Ascending aorta (tissue), 2 donors: ENCODE measurements at regions of chr12 and their contacts with region 1.

Region 1: GRCh38 chr12:80186727-80187217 is 87.4 kb downstream of the OTOGL start:
- DNase-seq: peak in 1 of 2 donors; percentile 88
- H3K4me3 ChIP-seq: peak overlapping the region in 1 of 2 donors; percentile 28
- H3K27ac ChIP-seq: peak overlapping the region; percentile 82 to 84
- H3K4me1 ChIP-seq: peaks cover 6 to 14% of the 10 kb centered on the region in 2 donors
- H3K27me3 ChIP-seq: no peaks in the 10 kb centered on the region
- CTCF ChIP-seq: peak; percentile 65 to 78 (median 69)

Region 2: GRCh38 chr12:79547735-79548609 is 638.8 kb before region 1 on chr12:
- intact Hi-C with region 1: loop called (anchors 2 kb)
- DNase-seq: no peak
- H3K4me3 ChIP-seq: no peak overlapping the region
- H3K27ac ChIP-seq: peak overlapping the region; percentile 83
- H3K4me1 ChIP-seq: peaks cover 18 to 42% of the 10 kb centered on the region in 2 donors
- H3K27me3 ChIP-seq: no peaks in the 10 kb centered on the region
- CTCF ChIP-seq: peak; percentile 24 to 80 (median 68)

Region 3: DNA sequence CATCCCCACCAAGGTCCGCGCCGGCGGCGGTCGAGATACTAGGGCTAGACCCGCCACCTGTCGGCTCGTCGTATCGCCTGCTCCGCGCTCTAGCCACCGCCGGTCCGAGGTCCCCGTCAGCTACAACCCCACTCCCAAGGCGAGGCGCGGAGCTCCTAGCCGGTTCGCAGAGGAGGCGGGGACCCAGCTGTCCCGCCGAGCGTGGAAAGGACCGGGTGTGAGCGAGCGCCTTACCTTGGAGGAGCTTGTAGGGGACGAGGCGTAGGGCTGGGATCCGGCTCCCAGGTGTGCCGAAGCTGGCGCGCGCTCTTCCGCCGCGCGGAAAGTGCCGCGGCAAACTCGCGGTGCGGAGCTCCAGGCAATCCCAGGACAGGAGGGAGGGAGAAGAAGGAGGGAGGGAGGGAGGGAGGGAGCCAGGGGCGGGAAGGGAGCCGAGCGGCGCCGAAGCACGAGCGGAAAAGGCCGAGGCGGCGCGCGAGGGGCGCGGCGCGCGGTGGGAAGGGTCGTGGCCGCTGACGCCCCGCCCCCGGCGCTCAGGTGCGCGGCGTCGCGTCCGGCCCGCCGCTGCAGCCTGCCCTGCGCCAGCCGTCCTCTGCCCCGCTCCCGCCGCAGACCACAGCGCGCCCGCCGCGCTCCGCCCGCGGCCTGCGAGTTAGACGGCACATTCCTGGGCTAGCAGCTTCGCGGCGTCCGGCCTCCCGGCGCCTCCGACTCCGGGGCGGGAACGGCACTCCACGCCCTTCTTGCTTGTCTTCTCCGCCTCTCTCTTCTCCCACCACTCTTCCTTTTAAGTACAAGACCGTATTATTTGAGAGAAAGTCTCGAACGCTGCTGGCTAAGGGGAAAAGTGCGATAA is 495.9 kb before region 1 on chr12 and contains the start of gene PAWR:
- intact Hi-C with region 1: loop called (anchors 5 kb)
- DNase-seq: peak in 1 of 2 donors; percentile 81
- H3K4me3 ChIP-seq: peak within 1 kb of the TSS; percentile 96 to 99
- H3K27ac ChIP-seq: peak within 1 kb of the TSS; percentile 93 to 99
- H3K4me1 ChIP-seq: peaks cover 0 to 7% of the 10 kb centered on the region in 2 donors
- H3K27me3 ChIP-seq: no peaks in the 10 kb centered on the region
- CTCF ChIP-seq: peak; percentile 2 to 44 (median 3)
- total RNA-seq, gene PAWR: 75.4 TPM

Region 4: GRCh38 chr12:79818856-79819255 is 367.9 kb before region 1 on chr12:
- intact Hi-C with region 1: loop called (anchors 10 kb)
- DNase-seq: no peak
- H3K4me3 ChIP-seq: peak overlapping the region in 1 of 2 donors; percentile 1
- H3K27ac ChIP-seq: peak overlapping the region; percentile 55 to 70
- H3K4me1 ChIP-seq: peaks cover 0 to 19% of the 10 kb centered on the region in 2 donors
- H3K27me3 ChIP-seq: no peaks in the 10 kb centered on the region
- CTCF ChIP-seq: no peak

Region 5: GRCh38 chr12:79935021-79935623 is 251.7 kb before region 1 on chr12 and contains the start of gene PPP1R12A:
- intact Hi-C with region 1: loop called (anchors 1 kb)
- DNase-seq: peak; percentile 83 to 98
- H3K4me3 ChIP-seq: peak within 1 kb of the TSS; percentile 75 to 93
- H3K27ac ChIP-seq: peak within 1 kb of the TSS; percentile 93 to 99
- H3K4me1 ChIP-seq: peaks cover 0 to 2% of the 10 kb centered on the region in 2 donors
- H3K27me3 ChIP-seq: no peaks in the 10 kb centered on the region
- CTCF ChIP-seq: peak in 1 of 3 experiments; percentile 8
- total RNA-seq, gene PPP1R12A: 374 TPM

Region 6: GRCh38 chr12:80118565-80119324 is 68.0 kb before region 1 on chr12:
- intact Hi-C with region 1: loop called (anchors 10 kb)
- DNase-seq: no peak
- H3K4me3 ChIP-seq: no peak overlapping the region
- H3K27ac ChIP-seq: peak overlapping the region; percentile 70 to 79
- H3K4me1 ChIP-seq: peaks cover 7 to 17% of the 10 kb centered on the region in 2 donors
- H3K27me3 ChIP-seq: no peaks in the 10 kb centered on the region
- CTCF ChIP-seq: no peak